Naive thymus-derived CD4-positive, alpha-beta T cell (primary cell): ENCODE measurements at regions of chr7 and their contacts with region 1.

Region 1: GRCh38 chr7:140726281-140726680 is 29.8 kb downstream of the NDUFB2 start:
- DNase-seq: peak in 4 of 9 donors; percentile 11 to 31 (median 26)
- ATAC-seq: no peak
- H3K4me3 ChIP-seq: no peak overlapping the region
- H3K4me3 Mint-ChIP-seq: no peak overlapping the region
- H3K27ac ChIP-seq: no peak overlapping the region
- H3K27ac Mint-ChIP-seq: peak overlapping the region in 7 of 9 donors; percentile 36 to 76 (median 53)
- H3K4me1 ChIP-seq: peaks cover 0 to 18% of the 10 kb centered on the region in 2 donors
- H3K4me1 Mint-ChIP-seq: peaks cover 9 to 39% (median 29%) of the 10 kb centered on the region in 7 donors
- H3K27me3 ChIP-seq: no peaks in the 10 kb centered on the region
- H3K27me3 Mint-ChIP-seq: no peaks in the 10 kb centered on the region

Region 2: DNA sequence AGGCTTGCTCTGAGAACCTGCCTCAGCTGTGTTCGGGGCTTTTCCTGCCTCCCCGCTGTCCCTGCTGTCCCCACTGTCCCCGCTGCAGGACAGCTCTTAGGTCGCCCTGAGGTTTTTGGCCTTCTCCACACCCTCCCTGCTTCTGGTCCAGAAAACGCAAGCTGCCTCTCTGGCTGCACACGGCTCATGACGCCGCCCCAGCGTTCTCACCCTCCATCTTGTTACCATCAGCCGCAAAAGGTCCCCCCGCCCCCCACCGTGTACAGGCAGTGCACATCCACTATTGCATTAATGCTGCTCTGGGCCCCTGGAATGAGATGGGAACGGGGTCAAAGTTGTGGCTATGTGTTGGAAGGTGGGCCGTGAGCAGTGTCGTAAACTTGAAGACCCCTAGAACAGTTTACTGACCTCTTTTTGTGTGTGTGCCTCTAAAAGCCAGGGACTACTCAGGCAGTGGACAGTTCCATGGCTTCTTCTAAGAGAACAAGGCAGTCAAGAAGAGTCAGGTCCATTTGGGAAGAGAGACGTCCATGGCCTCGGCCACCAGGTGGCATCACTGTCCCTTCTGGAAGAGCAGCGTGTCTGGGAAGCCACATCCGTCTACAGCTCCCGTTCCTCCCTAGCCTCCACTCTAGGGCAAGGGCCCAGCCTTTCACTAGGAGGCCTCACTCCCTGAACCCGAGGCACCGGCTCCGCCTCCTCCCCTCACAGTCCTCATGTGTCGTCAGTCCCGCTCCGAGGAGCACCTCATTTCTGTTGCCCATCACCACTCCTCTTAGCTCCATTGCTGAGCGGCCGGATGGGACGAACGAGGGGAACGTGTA is 208.5 kb before region 1 on chr7:
- CTCF ChIA-PET with region 1: no interaction called
- POLR2A ChIA-PET with region 1: no interaction called
- intact Hi-C with region 1: loop called in 1 of 2 experiments (anchors 1 kb)
- DNase-seq: peak; percentile 36 to 69 (median 45)
- ATAC-seq: peak; percentile 74
- H3K4me3 ChIP-seq: no peak overlapping the region
- H3K4me3 Mint-ChIP-seq: peak overlapping the region in 4 of 10 donors; percentile 23 to 65 (median 41)
- H3K27ac ChIP-seq: no peak overlapping the region
- H3K27ac Mint-ChIP-seq: peak overlapping the region in 1 of 9 donors; percentile 65
- H3K4me1 ChIP-seq: no peaks in the 10 kb centered on the region
- H3K4me1 Mint-ChIP-seq: peaks cover 0 to 7% (median 3%) of the 10 kb centered on the region in 7 donors
- H3K27me3 ChIP-seq: peaks cover 0 to 2% of the 10 kb centered on the region in 2 donors
- H3K27me3 Mint-ChIP-seq: peaks cover 0 to 11% (median 6%) of the 10 kb centered on the region in 5 donors

Region 3: GRCh38 chr7:140673063-140673773 is 53.1 kb before region 1 on chr7:
- CTCF ChIA-PET with region 1: no interaction called
- POLR2A ChIA-PET with region 1: interaction called, 13 read pairs
- intact Hi-C with region 1: loop called in 1 of 2 experiments (anchors 2 kb)
- DNase-seq: peak; percentile 56 to 78 (median 75)
- ATAC-seq: peak; percentile 82
- H3K4me3 ChIP-seq: peak overlapping the region; percentile 82
- H3K4me3 Mint-ChIP-seq: peak overlapping the region; percentile 81 to 94 (median 89)
- H3K27ac ChIP-seq: peak overlapping the region; percentile 91
- H3K27ac Mint-ChIP-seq: peak overlapping the region; percentile 68 to 97 (median 88)
- H3K4me1 ChIP-seq: peaks cover 11 to 14% of the 10 kb centered on the region in 2 donors
- H3K4me1 Mint-ChIP-seq: peaks cover 16 to 42% (median 37%) of the 10 kb centered on the region in 7 donors
- H3K27me3 ChIP-seq: no peaks in the 10 kb centered on the region
- H3K27me3 Mint-ChIP-seq: peaks cover 0 to 7% (median 0%) of the 10 kb centered on the region in 5 donors

Region 4: GRCh38 chr7:140738280-140738679 is 12.0 kb after region 1 on chr7:
- CTCF ChIA-PET with region 1: no interaction called
- POLR2A ChIA-PET with region 1: interaction called, 5 read pairs
- intact Hi-C with region 1: loop called in 1 of 2 experiments (anchors 2 kb)
- DNase-seq: no peak
- ATAC-seq: no peak
- H3K4me3 ChIP-seq: no peak overlapping the region
- H3K4me3 Mint-ChIP-seq: no peak overlapping the region
- H3K27ac ChIP-seq: no peak overlapping the region
- H3K27ac Mint-ChIP-seq: no peak overlapping the region
- H3K4me1 ChIP-seq: no peaks in the 10 kb centered on the region
- H3K4me1 Mint-ChIP-seq: no peaks in the 10 kb centered on the region
- H3K27me3 ChIP-seq: no peaks in the 10 kb centered on the region
- H3K27me3 Mint-ChIP-seq: no peaks in the 10 kb centered on the region

Region 5: GRCh38 chr7:140867467-140868462 is 141.5 kb after region 1 on chr7:
- CTCF ChIA-PET with region 1: no interaction called
- POLR2A ChIA-PET with region 1: no interaction called
- intact Hi-C with region 1: no loop called
- DNase-seq: no peak
- ATAC-seq: no peak
- H3K4me3 ChIP-seq: no peak overlapping the region
- H3K4me3 Mint-ChIP-seq: peak overlapping the region in 4 of 10 donors; percentile 4 to 35 (median 14)
- H3K27ac ChIP-seq: no peak overlapping the region
- H3K27ac Mint-ChIP-seq: no peak overlapping the region
- H3K4me1 ChIP-seq: peaks cover 0 to 5% of the 10 kb centered on the region in 2 donors
- H3K4me1 Mint-ChIP-seq: peaks cover 13 to 76% (median 63%) of the 10 kb centered on the region in 7 donors
- H3K27me3 ChIP-seq: no peaks in the 10 kb centered on the region
- H3K27me3 Mint-ChIP-seq: no peaks in the 10 kb centered on the region